Vagina (tissue), 2 donors: ENCODE measurements at regions of chr12 and their contacts with region 1.

Region 1: DNA sequence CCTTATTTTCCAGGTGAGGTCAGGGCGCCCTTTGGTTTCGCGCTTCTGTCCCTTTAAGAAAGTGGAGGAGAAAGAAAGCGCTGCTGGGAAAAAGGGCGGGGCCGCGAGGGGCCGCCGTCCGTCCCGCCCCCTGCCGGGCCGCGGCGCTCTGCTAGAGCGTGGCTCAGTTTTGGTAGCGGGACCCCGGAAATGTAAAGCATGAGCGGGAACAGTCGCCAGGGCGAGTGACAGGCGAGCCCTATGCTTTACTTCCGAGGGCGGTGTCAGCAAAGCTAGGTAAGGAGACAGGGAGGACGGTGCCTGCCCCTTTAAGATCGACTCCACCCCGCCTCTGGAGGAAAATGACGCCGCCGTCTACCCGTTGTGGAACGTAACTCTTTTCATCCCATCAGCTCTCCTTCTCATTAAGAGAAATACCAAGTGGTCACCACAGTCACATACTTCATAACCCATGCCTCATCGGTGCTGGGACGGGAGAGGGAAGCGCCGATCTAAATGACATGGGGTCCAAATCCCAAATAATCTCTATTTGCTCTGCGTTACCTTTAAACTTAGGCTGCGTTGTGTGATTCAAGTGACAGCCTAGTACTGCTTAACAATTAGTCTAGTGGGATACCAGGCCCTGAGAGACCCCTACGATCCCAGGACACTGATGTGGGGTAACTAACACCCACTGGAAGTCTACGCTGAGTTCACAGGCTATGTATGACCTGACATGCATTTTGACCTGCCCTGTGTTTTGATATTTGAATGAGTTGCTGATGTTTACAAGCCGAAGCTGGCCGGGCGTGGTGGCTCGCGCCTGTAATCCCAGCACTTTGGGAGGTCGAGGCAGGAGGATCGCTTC is at the start of gene ETFBKMT:
- DNase-seq: peak in 1 of 2 donors; percentile 93
- H3K4me3 ChIP-seq: peak within 1 kb of the TSS; percentile 71 to 81
- H3K27ac ChIP-seq: peak within 1 kb of the TSS; percentile 90
- H3K4me1 ChIP-seq: peaks cover 15% of the 10 kb centered on the region
- H3K27me3 ChIP-seq: no peaks in the 10 kb centered on the region
- CTCF ChIP-seq: peak in 2 of 3 experiments; percentile 52 to 66
- POLR2A ChIP-seq: no peak
- total RNA-seq, gene ETFBKMT: 0.98 TPM

Region 2: DNA sequence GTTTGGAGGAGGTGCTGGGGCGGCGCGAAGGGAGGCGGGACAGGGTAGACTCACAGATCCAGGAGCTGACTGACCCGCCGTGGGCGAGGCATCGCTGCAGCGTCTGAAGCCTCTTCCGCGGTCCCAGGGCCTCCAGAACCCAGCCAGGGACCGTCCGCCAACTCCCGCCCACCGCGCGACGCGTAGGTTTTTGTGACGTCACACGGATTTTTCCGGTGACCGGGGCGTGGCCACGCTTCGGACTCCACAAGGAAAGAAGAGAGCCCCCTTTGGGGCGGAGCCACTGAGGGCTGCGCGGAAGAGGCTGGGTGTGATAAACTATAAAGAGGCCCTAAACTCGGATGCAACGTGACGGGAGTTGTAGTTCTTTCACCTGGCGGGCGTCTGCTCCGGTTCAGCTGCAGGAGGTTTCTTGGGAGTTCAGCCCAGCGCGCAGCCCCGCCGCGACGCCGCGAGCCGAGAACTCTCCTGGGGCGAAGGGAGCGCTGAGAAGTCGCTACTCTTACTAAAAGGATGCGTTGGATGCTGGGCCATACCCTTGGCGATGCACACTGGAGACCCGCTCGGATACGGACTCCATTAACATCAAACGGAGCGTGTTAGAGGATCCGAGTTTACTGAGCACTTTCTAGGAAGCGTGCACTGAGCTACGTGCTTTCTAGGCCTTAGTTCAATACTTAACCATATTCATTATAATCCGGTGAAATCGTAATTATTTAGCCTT is 69.8 kb after region 1 on chr12 and contains the start of gene AMN1:
- intact Hi-C with region 1: loop called (anchors 10 kb)
- DNase-seq: peak; percentile 100
- H3K4me3 ChIP-seq: peak within 1 kb of the TSS; percentile 54 to 61
- H3K27ac ChIP-seq: peak within 1 kb of the TSS; percentile 94
- H3K4me1 ChIP-seq: peaks cover 50% of the 10 kb centered on the region
- H3K27me3 ChIP-seq: no peaks in the 10 kb centered on the region
- CTCF ChIP-seq: peak in 1 of 3 experiments; percentile 10
- POLR2A ChIP-seq: peak in 1 of 2 donors; percentile 62
- total RNA-seq, gene AMN1: 5.9 TPM

Region 3: GRCh38 chr12:32106517-32107358 is 447.4 kb after region 1 on chr12 and contains the start of gene BICD1:
- intact Hi-C with region 1: loop called (anchors 10 kb)
- DNase-seq: peak in 1 of 2 donors; percentile 87
- H3K4me3 ChIP-seq: peak within 1 kb of the TSS; percentile 78 to 90
- H3K27ac ChIP-seq: peak within 1 kb of the TSS; percentile 82
- H3K4me1 ChIP-seq: peaks cover 31% of the 10 kb centered on the region
- H3K27me3 ChIP-seq: no peaks in the 10 kb centered on the region
- CTCF ChIP-seq: peak in 2 of 3 experiments; percentile 19 to 29
- POLR2A ChIP-seq: peak in 1 of 2 donors; percentile 44
- total RNA-seq, gene BICD1: 19.6 TPM

Region 4: GRCh38 chr12:32302218-32303173 is 643.2 kb after region 1 on chr12:
- intact Hi-C with region 1: loop called (anchors 10 kb)
- DNase-seq: no peak
- H3K4me3 ChIP-seq: no peak overlapping the region
- H3K27ac ChIP-seq: no peak overlapping the region
- H3K4me1 ChIP-seq: no peaks in the 10 kb centered on the region
- H3K27me3 ChIP-seq: no peaks in the 10 kb centered on the region
- CTCF ChIP-seq: peak in 1 of 3 experiments; percentile 7
- POLR2A ChIP-seq: no peak